Prostate gland (tissue), 2 donors: ENCODE measurements at regions of chr17 and their contacts with region 1.

Region 1: GRCh38 chr17:42329025-42329976 is 41.0 kb downstream of the STAT5A start:
- DNase-seq: peak; percentile 43
- H3K4me3 ChIP-seq: no peak overlapping the region
- H3K27ac ChIP-seq: peak overlapping the region; percentile 49 to 51
- H3K4me1 ChIP-seq: no peaks in the 10 kb centered on the region
- H3K27me3 ChIP-seq: no peaks in the 10 kb centered on the region
- CTCF ChIP-seq: no peak
- POLR2A ChIP-seq: no peak

Region 2: DNA sequence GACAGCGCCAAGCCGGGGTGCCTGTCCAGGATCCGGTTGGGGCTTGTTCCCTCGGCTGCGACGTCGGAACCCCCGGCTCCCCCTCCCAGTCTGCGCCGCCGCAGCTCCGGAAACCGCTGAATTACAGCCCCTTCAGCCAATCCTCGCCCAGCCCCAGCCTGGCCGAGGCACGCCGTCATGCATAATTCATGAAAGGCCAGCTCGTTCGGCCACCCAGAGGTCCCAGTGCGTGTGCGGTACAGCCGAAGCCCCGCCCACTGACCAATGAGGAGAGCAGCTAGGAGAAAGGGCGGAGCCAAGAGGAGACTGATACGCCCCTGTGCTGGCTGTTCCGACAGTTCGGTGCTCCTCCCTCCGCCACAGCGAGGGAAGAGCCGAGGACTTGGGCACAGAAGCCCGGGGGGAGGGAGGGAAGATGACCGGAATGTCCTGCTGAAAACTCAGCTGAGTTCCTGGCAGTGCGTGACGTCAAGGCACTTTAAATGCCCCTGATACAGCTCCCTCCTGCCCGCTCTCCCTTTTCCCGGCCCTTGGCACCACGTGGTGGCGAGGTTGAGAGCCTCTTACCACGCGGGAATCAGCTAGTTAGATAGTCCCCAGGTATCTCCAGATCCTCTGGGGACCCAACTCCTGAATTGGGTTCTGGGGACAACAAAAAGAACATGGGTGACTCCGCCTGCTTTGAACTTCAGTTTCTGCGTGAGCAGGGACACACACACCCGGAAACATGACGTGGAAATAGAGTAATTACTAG is 59.3 kb after region 1 on chr17 and contains the start of gene STAT3:
- intact Hi-C with region 1: loop called (anchors 5 kb)
- DNase-seq: peak; percentile 100
- H3K4me3 ChIP-seq: peak within 1 kb of the TSS; percentile 92 to 100
- H3K27ac ChIP-seq: peak within 1 kb of the TSS; percentile 99 to 100
- H3K4me1 ChIP-seq: no peaks in the 10 kb centered on the region
- H3K27me3 ChIP-seq: no peaks in the 10 kb centered on the region
- CTCF ChIP-seq: peak in 1 of 4 experiments; percentile 2
- POLR2A ChIP-seq: peak; percentile 98
- total RNA-seq, gene STAT3: 188 to 230 TPM